ENCODE measurements at regions of chr12 and their contacts with region 1.

Region 1: DNA sequence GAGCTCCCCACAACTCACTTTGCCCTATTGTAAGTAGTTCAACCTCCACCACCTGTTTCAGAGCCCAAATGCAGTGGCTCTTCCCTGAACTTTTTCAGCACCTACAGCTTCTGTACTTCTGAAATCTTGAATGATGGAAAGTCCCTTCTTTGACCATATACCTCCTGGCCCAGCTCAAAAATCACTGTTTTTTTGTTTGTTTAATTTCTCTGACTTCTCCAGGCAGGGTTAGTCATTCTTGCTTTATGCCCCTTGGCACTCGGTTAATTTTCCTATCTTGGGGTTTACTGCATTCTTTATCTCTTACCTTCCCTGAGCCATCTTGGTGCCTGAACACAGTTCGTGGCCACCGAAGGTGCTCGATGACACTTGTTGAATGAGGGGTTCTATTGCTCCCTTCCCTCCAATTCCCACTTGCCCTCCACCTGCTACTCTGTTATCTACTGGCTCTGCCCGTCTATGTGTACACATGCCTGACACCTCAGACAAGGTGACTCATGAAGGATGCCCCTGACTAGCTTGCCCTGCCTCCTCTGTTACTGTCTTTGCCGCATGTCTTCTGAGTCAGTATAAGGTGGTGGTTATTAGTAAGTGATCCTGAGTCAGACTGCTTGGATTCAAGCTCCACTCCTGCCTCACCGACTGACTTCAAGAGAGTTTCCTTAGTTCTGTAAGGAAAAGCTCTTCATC is 4.4 kb downstream of the AMHR2 start:
- DNase-seq: peak; percentile 63
- H3K4me3 Mint-ChIP-seq: no peak overlapping the region
- H3K27ac Mint-ChIP-seq: no peak overlapping the region
- H3K4me1 Mint-ChIP-seq: peaks cover 11% of the 10 kb centered on the region
- H3K27me3 Mint-ChIP-seq: no peaks in the 10 kb centered on the region

Region 2: DNA sequence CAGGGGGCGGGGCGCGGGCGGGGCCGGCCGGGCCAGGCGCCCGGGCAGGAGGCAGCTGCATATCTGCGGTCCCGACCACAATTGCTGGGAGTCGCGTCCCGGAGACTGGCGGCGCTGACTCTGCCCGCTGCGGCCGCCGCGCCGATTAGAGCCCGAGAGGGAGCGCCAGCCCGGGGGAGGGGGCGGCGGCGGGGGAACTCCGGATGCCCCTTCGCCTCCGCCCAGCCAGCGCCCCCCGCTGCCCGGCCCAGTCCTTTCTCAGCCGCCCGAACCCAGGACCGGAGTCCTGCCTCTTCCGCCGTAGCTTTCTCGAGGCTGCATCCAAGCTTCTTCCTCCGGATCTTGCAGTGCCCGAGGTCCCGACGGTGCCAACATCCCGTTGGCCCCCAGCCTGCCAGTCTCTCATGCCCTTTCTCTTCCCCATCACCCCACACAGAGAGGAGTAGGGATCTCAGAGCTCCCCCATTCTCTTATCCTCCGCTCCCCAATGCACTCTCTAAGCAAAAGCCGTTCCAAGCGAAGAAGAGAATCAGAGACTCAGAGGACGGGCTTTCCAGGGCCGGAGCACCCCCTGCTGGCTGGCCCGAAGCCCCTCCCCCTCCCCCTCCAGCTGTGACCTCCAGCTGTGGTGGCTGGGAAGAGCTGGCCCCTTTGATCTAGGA is 83.1 kb before region 1 on chr12:
- CTCF ChIA-PET with region 1: interaction called, 36 read pairs
- intact Hi-C with region 1: no loop called
- DNase-seq: peak; percentile 86
- H3K4me3 Mint-ChIP-seq: peak overlapping the region; percentile 91
- H3K27ac Mint-ChIP-seq: no peak overlapping the region
- H3K4me1 Mint-ChIP-seq: peaks cover 9% of the 10 kb centered on the region
- H3K27me3 Mint-ChIP-seq: no peaks in the 10 kb centered on the region